ENCODE measurements at regions of chr7 and their contacts with region 1.

Region 1: GRCh38 chr7:16564909-16565426 is 38.3 kb downstream of the LRRC72 start:
- DNase-seq: peak; percentile 42
- ATAC-seq: peak; percentile 82
- H3K4me3 ChIP-seq: no peak overlapping the region
- H3K27ac ChIP-seq: no peak overlapping the region
- H3K4me1 ChIP-seq: no peaks in the 10 kb centered on the region
- H3K27me3 ChIP-seq: no peaks in the 10 kb centered on the region
- CTCF ChIP-seq: peak; percentile 87

Region 2: DNA sequence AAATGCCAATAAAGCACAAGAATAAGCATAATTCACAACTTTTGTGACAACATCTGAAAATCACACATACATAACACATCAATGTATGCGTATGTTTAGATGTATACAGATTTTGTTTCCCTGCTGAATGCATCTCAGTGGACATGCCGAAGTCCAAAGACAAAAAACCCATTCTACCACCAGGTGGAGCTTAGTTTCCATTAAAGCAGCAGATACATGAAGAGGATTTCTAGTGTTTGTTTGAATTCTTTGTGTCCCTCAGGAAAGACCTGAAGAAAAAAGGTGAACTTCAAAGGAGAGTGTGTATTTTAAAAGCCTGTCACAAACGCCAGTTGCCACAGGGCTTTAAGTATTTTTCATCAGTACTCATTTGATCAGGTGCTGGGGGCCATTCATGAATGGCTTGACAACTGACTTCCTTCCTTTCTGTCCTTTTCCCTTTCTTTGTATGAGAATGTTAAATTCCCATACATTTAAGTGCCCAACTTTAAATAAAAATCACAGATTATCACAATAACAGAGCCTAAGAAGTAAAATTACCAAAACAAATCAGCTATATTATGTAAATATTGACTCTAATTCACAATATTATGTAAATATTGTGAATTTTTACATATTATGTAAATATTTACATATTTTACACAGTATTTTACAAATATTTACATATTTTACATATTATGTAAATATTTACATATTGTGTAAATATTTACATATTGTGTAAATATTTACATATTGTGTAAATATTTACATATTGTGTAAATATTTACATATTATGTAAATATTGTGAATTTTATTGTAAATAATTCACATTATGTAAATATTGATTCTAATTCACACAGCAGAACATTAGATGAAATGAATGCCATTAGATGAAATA is 486.7 kb before region 1 on chr7:
- CTCF ChIA-PET with region 1: interaction called, 14 read pairs
- POLR2A ChIA-PET with region 1: no interaction called
- in situ Hi-C with region 1: no loop called
- intact Hi-C with region 1: loop called (anchors 1 kb)
- DNase-seq: peak; percentile 57
- ATAC-seq: peak; percentile 92
- H3K4me3 ChIP-seq: no peak overlapping the region
- H3K27ac ChIP-seq: no peak overlapping the region
- H3K4me1 ChIP-seq: no peaks in the 10 kb centered on the region
- H3K27me3 ChIP-seq: no peaks in the 10 kb centered on the region
- CTCF ChIP-seq: peak; percentile 78

Region 3: GRCh38 chr7:16114633-16115032 is 450.3 kb before region 1 on chr7:
- CTCF ChIA-PET with region 1: interaction called, 4 read pairs
- POLR2A ChIA-PET with region 1: no interaction called
- in situ Hi-C with region 1: no loop called
- intact Hi-C with region 1: loop called (anchors 10 kb)
- DNase-seq: peak; percentile 17
- ATAC-seq: no peak
- H3K4me3 ChIP-seq: no peak overlapping the region
- H3K27ac ChIP-seq: no peak overlapping the region
- H3K4me1 ChIP-seq: no peaks in the 10 kb centered on the region
- H3K27me3 ChIP-seq: no peaks in the 10 kb centered on the region
- CTCF ChIP-seq: peak; percentile 48; the same call in 1 of the 2 replicates

Region 4: GRCh38 chr7:16431646-16432424 is 133.1 kb before region 1 on chr7:
- CTCF ChIA-PET with region 1: interaction called, 18 read pairs
- POLR2A ChIA-PET with region 1: no interaction called
- in situ Hi-C with region 1: no loop called
- intact Hi-C with region 1: loop called (anchors 1 kb)
- DNase-seq: no peak
- ATAC-seq: peak; percentile 97
- H3K4me3 ChIP-seq: no peak overlapping the region
- H3K27ac ChIP-seq: no peak overlapping the region
- H3K4me1 ChIP-seq: no peaks in the 10 kb centered on the region
- H3K27me3 ChIP-seq: no peaks in the 10 kb centered on the region
- CTCF ChIP-seq: peak; percentile 77

Region 5: DNA sequence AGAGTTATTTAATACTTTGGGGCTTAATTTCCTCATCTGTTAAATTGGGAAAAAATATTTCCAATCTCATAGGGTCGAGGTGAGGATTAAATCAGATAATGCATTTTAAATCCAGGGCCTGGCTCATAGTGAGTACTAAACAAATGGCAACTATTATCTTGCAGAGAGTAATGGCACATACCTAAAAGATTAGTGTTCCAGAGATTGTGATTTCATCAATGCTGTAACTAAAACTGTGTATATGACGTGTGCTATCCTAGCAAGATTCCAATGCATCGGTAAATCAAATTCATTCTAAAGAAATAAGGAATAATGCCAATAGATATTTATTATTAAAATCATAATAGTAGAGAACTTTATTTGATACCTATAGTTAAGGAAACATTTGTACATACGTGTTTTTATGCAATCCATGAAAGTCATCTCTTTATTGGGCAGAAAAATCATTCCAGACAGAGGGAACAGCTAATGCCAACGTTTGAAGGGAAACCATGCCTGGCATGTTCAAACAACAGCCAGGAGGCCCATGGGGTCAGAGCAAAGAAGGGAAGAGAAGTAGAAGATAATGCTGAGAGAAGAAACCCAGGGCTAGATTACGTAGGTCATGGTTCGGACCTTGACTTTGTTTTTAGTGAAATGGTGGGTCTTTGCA is 491.6 kb after region 1 on chr7:
- CTCF ChIA-PET with region 1: no interaction called
- POLR2A ChIA-PET with region 1: no interaction called
- in situ Hi-C with region 1: no loop called
- intact Hi-C with region 1: no loop called
- DNase-seq: no peak
- ATAC-seq: no peak
- H3K4me3 ChIP-seq: no peak overlapping the region
- H3K27ac ChIP-seq: no peak overlapping the region
- H3K4me1 ChIP-seq: no peaks in the 10 kb centered on the region
- H3K27me3 ChIP-seq: no peaks in the 10 kb centered on the region
- CTCF ChIP-seq: no peak

Measured in Panc1 (cell line).